Ascending aorta (tissue), 2 donors: ENCODE measurements at regions of chr2 and their contacts with region 1.

Region 1: GRCh38 chr2:28751252-28751955 is at the start of gene PPP1CB:
- DNase-seq: peak; percentile 88 to 97
- H3K4me3 ChIP-seq: peak within 1 kb of the TSS; percentile 75 to 89
- H3K27ac ChIP-seq: peak within 1 kb of the TSS; percentile 100
- H3K4me1 ChIP-seq: peaks cover 15 to 40% of the 10 kb centered on the region in 2 donors
- H3K27me3 ChIP-seq: no peaks in the 10 kb centered on the region
- CTCF ChIP-seq: peak; percentile 9 to 34 (median 26)
- total RNA-seq, gene PPP1CB: 196 TPM

Region 2: DNA sequence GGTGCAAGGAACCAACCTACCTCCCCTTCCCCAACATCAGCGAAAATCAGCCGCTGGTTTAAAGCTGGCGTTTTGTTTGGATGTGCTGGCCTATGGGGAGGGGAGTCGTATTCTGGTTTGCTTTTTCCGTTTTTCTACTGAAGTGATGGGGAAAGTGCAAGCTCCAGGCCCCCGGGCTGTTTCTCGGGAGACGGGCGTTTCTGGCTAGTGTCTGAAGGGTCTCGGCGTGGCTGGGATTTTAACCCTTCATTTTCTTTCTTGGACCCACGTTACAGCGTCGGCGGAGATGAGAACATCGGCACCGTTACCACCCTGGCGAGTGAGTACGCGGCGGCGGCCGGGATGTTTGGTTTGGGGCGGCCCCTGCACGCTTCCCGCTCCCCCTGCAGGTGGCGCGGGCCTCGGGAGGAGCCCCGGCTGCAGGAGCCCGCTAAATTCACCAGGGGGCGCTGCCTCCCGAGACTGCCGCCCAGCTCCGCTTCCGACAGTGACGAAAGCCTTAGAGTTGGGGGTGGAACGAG is 184.8 kb before region 1 on chr2:
- intact Hi-C with region 1: loop called (anchors 2 kb)
- DNase-seq: peak; percentile 44 to 90
- H3K4me3 ChIP-seq: peak overlapping the region; percentile 50 to 71
- H3K27ac ChIP-seq: peak overlapping the region; percentile 32 to 39
- H3K4me1 ChIP-seq: peaks cover 0 to 5% of the 10 kb centered on the region in 2 donors
- H3K27me3 ChIP-seq: no peaks in the 10 kb centered on the region
- CTCF ChIP-seq: peak; percentile 100

Region 3: GRCh38 chr2:28626891-28627421 is 124.4 kb before region 1 on chr2:
- intact Hi-C with region 1: loop called (anchors 2 kb)
- DNase-seq: peak; percentile 60 to 93
- H3K4me3 ChIP-seq: no peak overlapping the region
- H3K27ac ChIP-seq: peak overlapping the region; percentile 94 to 100
- H3K4me1 ChIP-seq: peaks cover 40 to 76% of the 10 kb centered on the region in 2 donors
- H3K27me3 ChIP-seq: no peaks in the 10 kb centered on the region
- CTCF ChIP-seq: no peak

Region 4: GRCh38 chr2:28639836-28640235 is 111.6 kb before region 1 on chr2:
- intact Hi-C with region 1: loop called (anchors 1 kb)
- DNase-seq: no peak
- H3K4me3 ChIP-seq: no peak overlapping the region
- H3K27ac ChIP-seq: peak overlapping the region; percentile 94 to 98
- H3K4me1 ChIP-seq: peaks cover 30 to 49% of the 10 kb centered on the region in 2 donors
- H3K27me3 ChIP-seq: no peaks in the 10 kb centered on the region
- CTCF ChIP-seq: no peak

Region 5: DNA sequence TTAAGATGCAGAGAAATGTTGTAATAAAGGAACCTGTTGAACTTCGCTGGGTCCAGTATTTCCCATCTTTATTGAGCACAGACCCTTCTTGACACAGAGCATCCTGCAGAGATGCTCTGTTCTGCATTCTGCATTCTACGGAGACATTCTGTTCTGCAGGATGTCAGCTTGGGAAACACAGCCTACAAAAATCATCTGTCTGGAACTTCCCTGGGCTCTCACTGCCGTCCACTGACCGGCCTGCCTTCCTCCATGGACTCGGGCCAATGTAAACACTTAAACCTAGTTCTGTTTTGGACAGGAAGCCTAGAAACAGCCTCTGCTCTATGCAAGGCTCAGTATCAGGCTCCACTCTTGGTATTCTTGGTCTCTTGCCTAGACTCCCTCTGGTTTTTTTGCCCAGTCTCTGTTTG is 89.8 kb before region 1 on chr2:
- intact Hi-C with region 1: loop called (anchors 1 kb)
- DNase-seq: peak; percentile 63 to 93
- H3K4me3 ChIP-seq: no peak overlapping the region
- H3K27ac ChIP-seq: peak overlapping the region; percentile 91 to 94
- H3K4me1 ChIP-seq: peaks cover 13 to 59% of the 10 kb centered on the region in 2 donors
- H3K27me3 ChIP-seq: no peaks in the 10 kb centered on the region
- CTCF ChIP-seq: no peak

Region 6: GRCh38 chr2:28716265-28716867 is 35.0 kb before region 1 on chr2:
- intact Hi-C with region 1: loop called (anchors 1 kb)
- DNase-seq: peak; percentile 24 to 89
- H3K4me3 ChIP-seq: no peak overlapping the region
- H3K27ac ChIP-seq: peak overlapping the region; percentile 80 to 84
- H3K4me1 ChIP-seq: peaks cover 5 to 13% of the 10 kb centered on the region in 2 donors
- H3K27me3 ChIP-seq: no peaks in the 10 kb centered on the region
- CTCF ChIP-seq: no peak

Region 7: DNA sequence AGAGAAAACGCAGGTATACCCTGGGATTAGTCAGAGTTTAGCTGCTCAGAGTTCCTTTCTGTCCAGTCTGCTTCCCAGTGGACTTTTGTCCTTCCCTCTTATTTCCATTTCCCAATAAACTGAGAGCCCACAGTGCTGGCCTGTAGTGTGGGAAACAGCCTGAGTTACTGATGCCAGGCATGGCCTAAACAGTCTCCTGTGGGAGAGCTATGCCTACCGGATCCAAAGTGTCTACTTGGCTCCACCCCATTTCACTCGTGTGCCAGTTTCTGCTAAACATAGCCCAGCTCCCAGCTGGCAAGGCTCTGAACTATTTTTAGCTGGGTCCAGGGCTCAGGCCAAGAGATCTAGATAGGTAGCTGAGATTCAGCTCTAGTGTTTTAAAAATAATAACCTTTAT is 15.4 kb before region 1 on chr2:
- intact Hi-C with region 1: loop called (anchors 2 kb)
- DNase-seq: peak; percentile 72 to 95
- H3K4me3 ChIP-seq: peak overlapping the region; percentile 52 to 62
- H3K27ac ChIP-seq: peak overlapping the region; percentile 86 to 89
- H3K4me1 ChIP-seq: peaks cover 4 to 20% of the 10 kb centered on the region in 2 donors
- H3K27me3 ChIP-seq: no peaks in the 10 kb centered on the region
- CTCF ChIP-seq: no peak